ENCODE measurements at regions of chr6 and their contacts with region 1.

Region 1: GRCh38 chr6:159935065-159935464 is 33.8 kb upstream of the IGF2R start:
- DNase-seq: no peak
- H3K4me3 ChIP-seq: no peak overlapping the region
- H3K27ac ChIP-seq: no peak overlapping the region
- H3K4me1 ChIP-seq: no peaks in the 10 kb centered on the region
- H3K27me3 ChIP-seq: no peaks in the 10 kb centered on the region
- CTCF ChIP-seq: no peak

Region 2: GRCh38 chr6:159874435-159874834 is 60.6 kb before region 1 on chr6:
- CTCF ChIA-PET with region 1: no interaction called
- dilution Hi-C with region 1: no loop called
- in situ Hi-C with region 1: loop called (anchors 5 kb)
- intact Hi-C with region 1: no loop called
- DNase-seq: no peak
- H3K4me3 ChIP-seq: no peak overlapping the region
- H3K27ac ChIP-seq: no peak overlapping the region
- H3K4me1 ChIP-seq: no peaks in the 10 kb centered on the region
- H3K27me3 ChIP-seq: no peaks in the 10 kb centered on the region
- CTCF ChIP-seq: no peak

Region 3: DNA sequence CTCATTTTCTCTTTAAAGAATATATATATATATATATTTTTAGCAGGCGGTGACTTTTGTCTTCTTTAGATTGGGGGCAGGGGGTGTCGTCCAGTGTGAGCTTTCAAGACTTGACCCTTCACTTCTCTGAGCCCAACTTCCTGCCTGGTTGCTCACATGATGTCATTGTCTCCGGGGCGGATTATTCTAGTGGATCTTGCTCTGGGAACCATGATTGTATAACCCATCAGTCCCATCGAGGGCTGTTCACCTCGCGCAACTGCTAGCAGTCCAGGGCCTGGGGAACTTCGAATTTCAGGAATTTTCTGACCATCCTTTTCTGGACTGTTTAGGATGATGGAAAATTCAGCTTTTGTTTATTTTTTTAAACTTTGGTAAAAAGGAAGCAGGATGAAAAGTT is 34.9 kb after region 1 on chr6:
- CTCF ChIA-PET with region 1: no interaction called
- dilution Hi-C with region 1: no loop called
- in situ Hi-C with region 1: no loop called
- intact Hi-C with region 1: no loop called
- DNase-seq: peak; percentile 63
- H3K4me3 ChIP-seq: peak overlapping the region; percentile 70 to 88 (median 77)
- H3K27ac ChIP-seq: peak overlapping the region; percentile 67
- H3K4me1 ChIP-seq: peaks cover 44% of the 10 kb centered on the region
- H3K27me3 ChIP-seq: no peaks in the 10 kb centered on the region
- CTCF ChIP-seq: no peak

Region 4: DNA sequence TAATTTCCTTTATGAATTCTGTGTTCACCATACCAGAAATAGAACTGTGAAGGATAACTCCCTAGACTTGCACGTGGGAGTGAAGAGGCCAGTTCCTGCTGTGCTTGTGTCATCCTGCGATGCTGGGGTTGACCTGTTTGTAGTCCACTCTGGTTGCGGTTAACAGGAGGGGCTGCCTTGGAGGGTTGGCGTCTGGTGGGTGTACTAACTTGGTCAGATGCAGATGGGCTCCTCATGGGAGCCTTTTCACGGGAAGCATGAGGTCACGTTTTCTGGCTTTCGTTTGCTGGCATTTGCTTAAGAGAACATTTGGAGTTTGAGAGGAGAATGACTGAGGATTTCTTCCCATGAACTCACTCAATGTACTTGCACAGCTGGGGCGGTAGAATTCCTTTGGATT is 75.0 kb after region 1 on chr6:
- CTCF ChIA-PET with region 1: no interaction called
- dilution Hi-C with region 1: no loop called
- in situ Hi-C with region 1: no loop called
- intact Hi-C with region 1: no loop called
- DNase-seq: no peak
- H3K4me3 ChIP-seq: no peak overlapping the region
- H3K27ac ChIP-seq: no peak overlapping the region
- H3K4me1 ChIP-seq: peaks cover 3% of the 10 kb centered on the region
- H3K27me3 ChIP-seq: no peaks in the 10 kb centered on the region
- CTCF ChIP-seq: no peak